ENCODE measurements at regions of chr2 and their contacts with region 1.

Region 1: DNA sequence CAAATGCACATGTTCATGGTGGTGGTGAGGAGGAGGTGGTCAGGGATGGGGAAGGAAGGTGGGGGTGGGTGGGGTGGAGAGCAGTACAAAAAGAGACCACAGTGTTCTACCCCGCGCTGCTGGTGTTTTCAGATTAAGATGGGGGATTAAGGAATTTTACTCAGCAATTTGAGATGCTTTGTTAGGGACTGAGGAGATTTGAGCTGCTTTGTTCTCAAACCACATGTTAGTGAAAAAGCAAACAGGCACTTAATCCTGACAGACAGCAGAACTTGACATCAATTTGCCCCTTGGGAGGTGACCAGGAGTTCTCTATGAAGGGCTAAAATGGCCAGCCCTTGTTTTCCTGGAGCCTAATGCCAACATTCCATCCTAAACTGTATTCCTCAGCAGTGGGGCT is 244.5 kb downstream of the MEIS1 start:
- DNase-seq: no peak
- ATAC-seq: no peak
- H3K4me3 ChIP-seq: no peak overlapping the region
- H3K27ac ChIP-seq: no peak overlapping the region
- H3K4me1 ChIP-seq: peaks cover 25% of the 10 kb centered on the region
- H3K27me3 ChIP-seq: no peaks in the 10 kb centered on the region
- CTCF ChIP-seq: no peak
- POLR2A ChIP-seq: no peak

Region 2: DNA sequence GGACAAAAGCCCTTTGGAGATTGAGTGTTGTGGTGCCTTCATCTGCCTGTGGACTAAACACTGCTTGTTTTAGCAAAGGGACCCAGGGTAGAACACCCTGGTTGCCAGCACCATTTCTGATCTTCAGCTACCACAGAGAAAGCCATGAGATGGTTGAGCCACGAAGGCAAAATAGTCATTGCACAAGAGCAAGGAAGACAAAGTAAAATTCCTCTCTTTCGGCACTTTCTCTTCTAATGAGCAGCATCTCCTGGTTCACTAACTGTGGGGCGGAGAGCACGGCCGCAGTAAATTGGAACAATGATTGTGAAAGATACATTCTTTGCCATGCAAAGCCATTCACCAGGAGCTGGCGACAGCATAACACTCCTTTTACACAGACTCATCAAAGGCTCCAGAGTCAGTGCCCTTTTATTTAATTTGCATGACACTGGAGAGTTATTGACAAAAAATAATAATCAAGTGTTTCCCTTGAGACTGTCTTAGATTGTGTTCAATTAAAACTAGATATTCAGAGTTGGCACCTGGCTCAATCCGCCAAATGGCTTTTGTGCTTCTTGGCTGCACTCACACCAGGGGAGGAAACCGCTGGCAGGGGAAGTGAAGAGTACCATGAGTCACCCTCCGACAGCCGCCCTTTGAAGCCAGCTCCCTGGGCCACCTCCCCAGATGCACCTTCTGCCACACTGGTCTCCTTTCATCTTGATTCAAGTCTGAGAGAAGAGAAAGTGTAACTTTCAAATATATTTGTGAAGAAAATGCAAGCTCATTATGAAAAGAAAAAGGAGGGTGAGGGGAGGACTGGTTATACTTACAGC is 345.0 kb before region 1 on chr2:
- intact Hi-C with region 1: no loop called
- DNase-seq: no peak
- ATAC-seq: no peak
- H3K4me3 ChIP-seq: no peak overlapping the region
- H3K27ac ChIP-seq: no peak overlapping the region
- H3K4me1 ChIP-seq: no peaks in the 10 kb centered on the region
- H3K27me3 ChIP-seq: no peaks in the 10 kb centered on the region
- CTCF ChIP-seq: no peak
- POLR2A ChIP-seq: no peak

Region 3: GRCh38 chr2:66601624-66602023 is 77.8 kb before region 1 on chr2:
- intact Hi-C with region 1: loop called (anchors 10 kb)
- DNase-seq: no peak
- ATAC-seq: no peak
- H3K4me3 ChIP-seq: no peak overlapping the region
- H3K27ac ChIP-seq: no peak overlapping the region
- H3K4me1 ChIP-seq: no peaks in the 10 kb centered on the region
- H3K27me3 ChIP-seq: no peaks in the 10 kb centered on the region
- CTCF ChIP-seq: no peak
- POLR2A ChIP-seq: no peak

Measured in body of pancreas (tissue), 4 donors.